ENCODE measurements at regions of chr4 and their contacts with region 1.

Region 1: GRCh38 chr4:187396106-187396505 is 599.5 kb upstream of the ZFP42 start:
- DNase-seq: no peak

Region 2: DNA sequence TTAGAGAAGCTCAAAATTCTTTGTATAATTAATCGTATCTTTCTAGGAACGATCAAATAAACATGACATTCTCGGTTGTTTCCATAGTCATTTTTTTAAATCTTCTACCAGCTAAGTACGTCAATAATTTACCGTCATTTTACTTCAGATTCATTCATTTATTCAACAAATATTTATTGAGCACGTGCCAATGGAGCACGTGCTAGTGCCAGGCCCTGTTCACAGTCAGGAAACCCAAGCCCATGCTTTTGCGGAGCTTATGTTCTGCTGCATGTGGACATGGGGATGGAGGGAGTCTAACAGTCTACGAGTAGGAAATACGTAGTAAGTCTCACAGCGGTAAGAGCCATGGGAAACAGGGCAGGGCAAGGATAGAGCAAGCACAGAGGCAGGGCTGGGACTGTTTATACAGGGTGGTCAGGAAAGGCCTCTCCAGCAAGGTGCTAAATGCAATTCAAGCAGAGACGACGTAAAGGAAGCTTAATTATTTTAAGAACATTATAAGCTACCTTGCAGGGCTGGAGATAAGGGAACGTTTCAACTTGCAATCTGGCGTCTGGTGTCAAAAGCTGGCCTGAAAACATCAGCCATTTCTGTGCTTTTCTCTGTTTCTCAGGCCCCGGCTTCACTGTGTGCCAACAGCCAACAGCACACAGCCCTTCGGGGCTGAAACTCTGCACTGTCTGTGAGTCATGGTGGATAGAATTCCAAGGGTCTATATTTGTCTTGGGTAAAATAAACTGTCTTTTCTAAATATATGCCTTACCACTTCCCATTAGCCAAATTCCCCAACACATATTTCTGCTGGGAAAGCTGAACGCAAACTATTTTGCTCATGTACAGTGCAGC is 82.4 kb after region 1 on chr4:
- intact Hi-C with region 1: loop called in 1 of 2 experiments (anchors 2 kb)
- DNase-seq: no peak

Measured in posterior vena cava (tissue), 2 donors.